Pancreas (tissue), 10 donors: ENCODE measurements at regions of chr6 and their contacts with region 1.

Region 1: DNA sequence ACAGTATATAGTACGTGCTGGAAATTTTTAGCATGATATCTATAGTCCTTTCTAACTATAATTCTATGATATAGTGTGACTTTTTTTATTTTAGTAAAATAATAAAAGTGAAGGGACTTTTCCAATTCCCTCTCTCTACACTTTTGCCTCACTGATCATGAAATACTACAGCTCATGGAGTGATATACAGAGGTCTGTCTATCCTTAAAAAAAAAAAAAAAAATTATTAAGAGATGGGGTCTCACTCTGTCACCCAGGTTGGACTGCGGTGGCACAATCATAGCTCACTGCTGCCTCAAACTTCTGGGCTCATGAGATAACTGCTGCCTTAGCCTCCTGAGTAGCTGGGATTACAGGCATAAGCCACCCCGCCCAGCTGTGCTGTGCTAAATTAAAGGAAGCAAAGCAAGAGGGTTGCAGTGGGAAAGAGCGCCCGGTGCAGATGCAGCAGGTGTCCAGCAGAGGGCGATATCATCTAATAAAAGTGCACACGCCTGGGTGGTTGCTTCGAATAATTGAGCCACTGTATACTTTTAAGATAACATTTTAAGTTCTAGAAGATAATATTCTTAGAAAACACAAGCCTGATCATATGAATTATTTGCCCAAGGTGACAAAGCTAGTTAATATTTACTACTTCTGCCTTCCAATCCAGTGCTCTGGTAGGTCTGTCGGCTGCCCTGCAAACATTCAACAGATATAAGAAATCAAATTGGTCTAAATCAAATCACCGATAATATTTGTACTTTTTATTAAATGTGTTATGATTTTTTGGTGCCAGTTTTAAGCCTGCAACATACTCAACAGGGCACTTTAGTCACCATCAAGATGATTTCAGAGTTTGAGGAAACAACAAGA is 94.9 kb upstream of the NT5E start:
- DNase-seq: peak; percentile 44 to 87 (median 76)
- ATAC-seq: peak; percentile 93 to 100 (median 98)
- H3K4me3 ChIP-seq: no peak overlapping the region
- H3K27ac ChIP-seq: no peak overlapping the region
- H3K4me1 ChIP-seq: peaks cover 0 to 9% (median 4%) of the 10 kb centered on the region in 3 donors
- H3K27me3 ChIP-seq: no peaks in the 10 kb centered on the region
- CTCF ChIP-seq: peak; percentile 91 to 95 (median 92)

Region 2: DNA sequence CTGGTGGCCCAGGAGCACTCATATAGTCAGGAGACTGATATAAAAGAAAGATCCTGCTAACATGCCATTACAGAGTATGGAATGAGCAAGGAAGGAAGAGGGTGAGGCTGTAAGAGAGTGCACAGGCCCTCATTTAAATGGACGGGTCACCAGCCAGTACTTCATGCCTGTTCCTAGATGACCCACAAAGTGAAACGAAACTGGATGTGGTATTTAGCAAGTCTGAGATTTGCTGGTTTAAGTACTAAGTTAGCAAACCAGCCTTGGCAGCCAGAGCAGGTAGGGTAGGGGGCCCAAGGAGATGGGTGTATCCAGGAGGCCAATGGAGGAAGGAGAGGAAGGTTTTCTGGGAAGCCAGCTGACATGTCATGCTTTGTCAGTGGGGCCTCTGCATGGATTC is 110.8 kb after region 1 on chr6:
- intact Hi-C with region 1: no loop called
- DNase-seq: no peak
- ATAC-seq: no peak
- H3K4me3 ChIP-seq: no peak overlapping the region
- H3K27ac ChIP-seq: no peak overlapping the region
- H3K4me1 ChIP-seq: peaks cover 0 to 5% (median 0%) of the 10 kb centered on the region in 3 donors
- H3K27me3 ChIP-seq: no peaks in the 10 kb centered on the region
- CTCF ChIP-seq: no peak

Region 3: GRCh38 chr6:85482905-85483700 is 128.1 kb after region 1 on chr6:
- intact Hi-C with region 1: loop called (anchors 5 to 10 kb)
- DNase-seq: peak; percentile 44 to 97 (median 83)
- ATAC-seq: peak; percentile 97 to 100 (median 98)
- H3K4me3 ChIP-seq: no peak overlapping the region
- H3K27ac ChIP-seq: no peak overlapping the region
- H3K4me1 ChIP-seq: no peaks in the 10 kb centered on the region
- H3K27me3 ChIP-seq: no peaks in the 10 kb centered on the region
- CTCF ChIP-seq: peak; percentile 99 to 100 (median 100)

Region 4: GRCh38 chr6:85494554-85495536 is 139.9 kb after region 1 on chr6:
- intact Hi-C with region 1: no loop called
- DNase-seq: no peak
- ATAC-seq: no peak
- H3K4me3 ChIP-seq: no peak overlapping the region
- H3K27ac ChIP-seq: no peak overlapping the region
- H3K4me1 ChIP-seq: peaks cover 0 to 7% (median 0%) of the 10 kb centered on the region in 3 donors
- H3K27me3 ChIP-seq: no peaks in the 10 kb centered on the region
- CTCF ChIP-seq: no peak